ENCODE measurements at regions of chr3 and their contacts with region 1.

Region 1: GRCh38 chr3:72255791-72256559 is 471.0 kb upstream of the PROK2 start:
- DNase-seq: peak in 3 of 5 donors; percentile 37 to 75 (median 44)
- ATAC-seq: peak; percentile 69 to 80 (median 74)
- H3K4me3 ChIP-seq: no peak overlapping the region
- H3K27ac ChIP-seq: peak overlapping the region in 2 of 12 donors; percentile 24 to 34
- H3K4me1 ChIP-seq: peaks cover 0 to 30% (median 16%) of the 10 kb centered on the region in 12 donors
- H3K27me3 ChIP-seq: no peaks in the 10 kb centered on the region
- CTCF ChIP-seq: peak in 1 of 12 donors; percentile 30
- POLR2A ChIP-seq: no peak

Region 2: GRCh38 chr3:71846185-71846584 is 409.8 kb before region 1 on chr3:
- intact Hi-C with region 1: no loop called
- DNase-seq: no peak
- ATAC-seq: no peak
- H3K4me3 ChIP-seq: no peak overlapping the region
- H3K27ac ChIP-seq: no peak overlapping the region
- H3K4me1 ChIP-seq: peaks cover 0 to 21% (median 0%) of the 10 kb centered on the region in 12 donors
- H3K27me3 ChIP-seq: peaks cover 0 to 51% (median 0%) of the 10 kb centered on the region in 9 donors
- CTCF ChIP-seq: no peak
- POLR2A ChIP-seq: no peak

Region 3: GRCh38 chr3:71875461-71875947 is 380.5 kb before region 1 on chr3:
- intact Hi-C with region 1: loop called in 6 of 10 experiments (anchors 5 to 10 kb)
- DNase-seq: peak; percentile 59 to 85 (median 76)
- ATAC-seq: peak; percentile 80 to 96 (median 91)
- H3K4me3 ChIP-seq: no peak overlapping the region
- H3K27ac ChIP-seq: no peak overlapping the region
- H3K4me1 ChIP-seq: peaks cover 0 to 8% (median 0%) of the 10 kb centered on the region in 12 donors
- H3K27me3 ChIP-seq: peaks cover 0 to 9% (median 0%) of the 10 kb centered on the region in 9 donors
- CTCF ChIP-seq: peak; percentile 77 to 90 (median 85)
- POLR2A ChIP-seq: no peak

Region 4: DNA sequence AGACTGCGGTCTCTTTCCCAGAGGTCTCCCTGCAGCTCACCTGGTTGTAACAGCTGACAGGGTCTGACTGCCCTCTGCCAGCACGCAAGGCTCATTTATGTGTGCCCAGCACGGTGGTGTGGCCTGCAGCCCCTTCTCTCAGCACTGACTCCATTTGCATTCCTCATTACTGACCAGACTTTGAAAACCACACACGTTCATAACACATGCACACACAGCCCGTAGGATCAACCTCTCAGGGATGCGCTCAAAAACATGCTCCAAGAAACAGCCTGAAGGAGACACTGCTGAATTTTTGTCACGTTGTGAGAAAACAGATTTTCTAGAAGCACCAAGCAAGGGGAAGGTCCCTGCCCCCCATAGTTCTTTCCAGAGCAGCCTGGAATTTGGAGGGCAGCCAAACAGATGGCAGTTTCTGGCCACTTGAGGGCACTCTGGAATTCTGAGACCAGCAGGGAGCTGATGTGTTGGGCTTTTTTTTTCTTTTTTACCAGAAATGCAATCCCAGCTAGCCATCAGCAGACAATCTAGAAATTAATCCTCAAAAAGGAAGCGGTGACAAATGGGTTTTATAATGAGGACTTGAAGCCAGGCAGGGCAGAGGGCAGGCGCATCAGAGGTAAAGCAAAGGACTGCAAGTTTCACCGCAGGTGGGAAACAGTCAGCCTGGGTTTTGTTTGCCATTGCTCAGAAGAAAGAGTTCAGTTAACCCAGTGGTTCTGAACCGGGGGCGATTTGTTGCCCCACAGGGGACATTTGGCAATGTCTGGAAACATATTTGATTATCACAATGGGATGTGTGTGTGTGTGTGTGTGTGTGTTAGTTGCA is 300.5 kb before region 1 on chr3:
- intact Hi-C with region 1: loop called in 8 of 10 experiments (anchors 10 kb)
- DNase-seq: peak; percentile 62 to 75 (median 72)
- ATAC-seq: peak in 3 of 4 donors; percentile 62 to 76 (median 76)
- H3K4me3 ChIP-seq: no peak overlapping the region
- H3K27ac ChIP-seq: no peak overlapping the region
- H3K4me1 ChIP-seq: peaks cover 0 to 10% (median 5%) of the 10 kb centered on the region in 12 donors
- H3K27me3 ChIP-seq: peaks cover 0 to 8% (median 0%) of the 10 kb centered on the region in 9 donors
- CTCF ChIP-seq: peak; percentile 49 to 84 (median 74)
- POLR2A ChIP-seq: no peak

Region 5: GRCh38 chr3:72100601-72101187 is 155.3 kb before region 1 on chr3:
- intact Hi-C with region 1: loop called in 1 of 10 experiments (anchors 10 kb)
- DNase-seq: peak; percentile 83 to 94 (median 85)
- ATAC-seq: peak; percentile 66 to 90 (median 81)
- H3K4me3 ChIP-seq: peak overlapping the region in 10 of 12 donors; percentile 9 to 51 (median 42)
- H3K27ac ChIP-seq: peak overlapping the region in 3 of 12 donors; percentile 24 to 88 (median 37)
- H3K4me1 ChIP-seq: peaks cover 0 to 44% (median 14%) of the 10 kb centered on the region in 12 donors
- H3K27me3 ChIP-seq: peaks cover 0 to 26% (median 3%) of the 10 kb centered on the region in 9 donors
- CTCF ChIP-seq: no peak
- POLR2A ChIP-seq: no peak

Region 6: GRCh38 chr3:72384602-72385001 is 128.6 kb after region 1 on chr3:
- intact Hi-C with region 1: no loop called
- DNase-seq: no peak
- ATAC-seq: no peak
- H3K4me3 ChIP-seq: no peak overlapping the region
- H3K27ac ChIP-seq: no peak overlapping the region
- H3K4me1 ChIP-seq: peaks cover 0 to 58% (median 30%) of the 10 kb centered on the region in 12 donors
- H3K27me3 ChIP-seq: no peaks in the 10 kb centered on the region
- CTCF ChIP-seq: no peak
- POLR2A ChIP-seq: no peak

Region 7: GRCh38 chr3:72427624-72428023 is 171.6 kb after region 1 on chr3:
- intact Hi-C with region 1: no loop called
- DNase-seq: no peak
- ATAC-seq: peak in 1 of 4 donors; percentile 30
- H3K4me3 ChIP-seq: no peak overlapping the region
- H3K27ac ChIP-seq: no peak overlapping the region
- H3K4me1 ChIP-seq: peaks cover 0 to 65% (median 37%) of the 10 kb centered on the region in 12 donors
- H3K27me3 ChIP-seq: no peaks in the 10 kb centered on the region
- CTCF ChIP-seq: no peak
- POLR2A ChIP-seq: no peak

Region 8: DNA sequence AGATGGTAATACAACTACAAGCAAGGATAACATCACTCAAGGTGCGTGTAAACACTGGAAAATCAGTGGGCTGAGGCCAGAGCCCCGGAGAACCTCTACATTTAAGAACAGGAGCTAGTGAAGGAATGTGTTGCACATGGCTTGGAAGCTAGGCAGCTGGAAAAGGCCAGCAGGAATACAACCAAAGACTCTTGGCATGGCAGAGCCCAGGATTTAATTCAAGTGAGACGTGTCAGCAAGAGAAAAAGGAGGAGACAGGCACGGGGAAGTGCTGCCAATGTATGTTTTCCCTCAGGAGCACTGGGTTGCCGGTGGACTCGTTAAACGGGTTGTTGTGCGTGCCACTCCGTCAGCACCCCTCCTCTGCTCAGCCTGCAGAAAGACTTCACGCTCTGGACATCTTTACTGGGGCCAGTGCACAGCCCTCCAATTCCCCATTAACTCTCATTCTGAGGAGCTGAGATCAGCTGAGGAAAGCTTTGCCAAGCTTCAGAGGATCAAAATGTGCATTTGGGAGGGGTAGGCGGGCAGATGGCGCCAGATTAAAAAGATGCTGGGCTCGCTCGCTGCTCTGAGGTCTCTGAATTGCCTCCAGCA is 1265.0 kb after region 1 on chr3:
- intact Hi-C with region 1: no loop called
- DNase-seq: peak in 2 of 5 donors; percentile 29 to 50
- ATAC-seq: peak; percentile 44 to 71 (median 58)
- H3K4me3 ChIP-seq: peak overlapping the region in 2 of 12 donors; percentile 8 to 10
- H3K27ac ChIP-seq: peak overlapping the region in 11 of 12 donors; percentile 22 to 85 (median 42)
- H3K4me1 ChIP-seq: peaks cover 0 to 64% (median 24%) of the 10 kb centered on the region in 12 donors
- H3K27me3 ChIP-seq: no peaks in the 10 kb centered on the region
- CTCF ChIP-seq: peak in 1 of 12 donors; percentile 0
- POLR2A ChIP-seq: no peak

Measured in heart left ventricle (tissue), 16 donors.